Prostate gland (tissue), 2 donors: ENCODE measurements at regions of chr14 and their contacts with region 1.

Region 1: DNA sequence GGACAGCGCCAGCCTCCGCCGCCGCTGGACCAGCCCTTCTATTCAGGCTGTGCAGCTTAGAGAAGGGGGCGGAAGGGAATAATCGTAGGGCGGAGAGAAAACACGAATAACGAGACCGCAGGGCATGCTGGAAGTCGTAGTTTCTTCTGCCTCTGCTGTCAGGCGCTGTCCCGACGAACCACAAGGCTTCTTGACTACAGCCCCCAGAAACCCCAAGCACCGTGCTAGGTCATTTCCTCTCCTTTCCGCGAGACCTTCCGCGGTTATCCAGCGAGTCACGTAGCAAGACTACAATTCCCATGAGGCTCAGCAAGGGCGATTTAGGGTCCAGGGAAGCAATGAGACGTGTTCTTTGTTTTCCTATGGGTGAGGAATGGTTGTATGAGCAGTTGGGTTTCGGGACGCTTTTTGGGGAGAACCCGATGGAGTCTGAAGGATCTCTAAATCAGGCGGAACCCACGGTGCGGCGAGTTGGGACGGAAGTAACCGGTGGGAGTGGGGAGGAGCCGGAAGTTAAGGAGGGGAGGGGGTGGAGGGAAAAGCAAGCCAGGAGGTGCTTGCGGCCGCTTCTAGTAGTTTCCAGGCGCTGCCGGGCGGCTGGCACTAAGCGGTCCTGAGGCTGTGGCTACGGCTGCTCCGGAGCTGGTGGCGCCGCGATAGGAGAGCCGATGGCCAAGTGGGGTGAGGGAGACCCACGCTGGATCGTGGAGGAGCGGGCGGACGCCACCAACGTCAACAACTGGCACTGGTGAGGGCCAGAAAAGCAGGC is at the starts of genes AHSA1 and VIPAS39:
- DNase-seq: peak; percentile 97
- H3K4me3 ChIP-seq: peak within 1 kb of the TSS; percentile 71 to 84
- H3K27ac ChIP-seq: peak within 1 kb of the TSS; percentile 92 to 97
- H3K4me1 ChIP-seq: no peaks in the 10 kb centered on the region
- H3K27me3 ChIP-seq: no peaks in the 10 kb centered on the region
- CTCF ChIP-seq: peak in 1 of 4 experiments; percentile 14
- POLR2A ChIP-seq: peak; percentile 78
- total RNA-seq, gene AHSA1: 144 to 267 TPM
- total RNA-seq, gene VIPAS39: 19.6 to 45.4 TPM

Region 2: GRCh38 chr14:77158175-77158891 is 299.4 kb before region 1 on chr14:
- intact Hi-C with region 1: loop called (anchors 5 kb)
- DNase-seq: no peak
- H3K4me3 ChIP-seq: no peak overlapping the region
- H3K27ac ChIP-seq: no peak overlapping the region
- H3K4me1 ChIP-seq: no peaks in the 10 kb centered on the region
- H3K27me3 ChIP-seq: peaks cover 2% of the 10 kb centered on the region
- CTCF ChIP-seq: no peak
- POLR2A ChIP-seq: no peak

Region 3: GRCh38 chr14:77320238-77320935 is 137.3 kb before region 1 on chr14 and contains the start of gene POMT2:
- intact Hi-C with region 1: loop called (anchors 2 kb)
- DNase-seq: peak; percentile 93
- H3K4me3 ChIP-seq: peak within 1 kb of the TSS; percentile 87 to 93
- H3K27ac ChIP-seq: peak within 1 kb of the TSS; percentile 98 to 99
- H3K4me1 ChIP-seq: peaks cover 7% of the 10 kb centered on the region
- H3K27me3 ChIP-seq: no peaks in the 10 kb centered on the region
- CTCF ChIP-seq: peak; percentile 50 to 84 (median 64)
- POLR2A ChIP-seq: no peak
- total RNA-seq, gene POMT2: 8.4 to 101 TPM

Region 4: GRCh38 chr14:77376771-77377501 is 80.8 kb before region 1 on chr14 and contains the starts of genes SAMD15 and TMED8:
- intact Hi-C with region 1: loop called (anchors 5 kb)
- DNase-seq: peak; percentile 74
- H3K4me3 ChIP-seq: peak within 1 kb of the TSS; percentile 73
- H3K27ac ChIP-seq: peak within 1 kb of the TSS; percentile 84 to 85
- H3K4me1 ChIP-seq: peaks cover 2% of the 10 kb centered on the region
- H3K27me3 ChIP-seq: no peaks in the 10 kb centered on the region
- CTCF ChIP-seq: peak in 2 of 4 experiments; percentile 43 to 48
- POLR2A ChIP-seq: peak; percentile 31
- total RNA-seq, gene SAMD15: 0.96 to 2.9 TPM
- total RNA-seq, gene TMED8: 14.7 to 35.2 TPM

Region 5: GRCh38 chr14:77547512-77548180 is 89.9 kb after region 1 on chr14:
- intact Hi-C with region 1: loop called (anchors 2 kb)
- DNase-seq: no peak
- H3K4me3 ChIP-seq: no peak overlapping the region
- H3K27ac ChIP-seq: no peak overlapping the region
- H3K4me1 ChIP-seq: no peaks in the 10 kb centered on the region
- H3K27me3 ChIP-seq: no peaks in the 10 kb centered on the region
- CTCF ChIP-seq: no peak
- POLR2A ChIP-seq: no peak

Region 6: DNA sequence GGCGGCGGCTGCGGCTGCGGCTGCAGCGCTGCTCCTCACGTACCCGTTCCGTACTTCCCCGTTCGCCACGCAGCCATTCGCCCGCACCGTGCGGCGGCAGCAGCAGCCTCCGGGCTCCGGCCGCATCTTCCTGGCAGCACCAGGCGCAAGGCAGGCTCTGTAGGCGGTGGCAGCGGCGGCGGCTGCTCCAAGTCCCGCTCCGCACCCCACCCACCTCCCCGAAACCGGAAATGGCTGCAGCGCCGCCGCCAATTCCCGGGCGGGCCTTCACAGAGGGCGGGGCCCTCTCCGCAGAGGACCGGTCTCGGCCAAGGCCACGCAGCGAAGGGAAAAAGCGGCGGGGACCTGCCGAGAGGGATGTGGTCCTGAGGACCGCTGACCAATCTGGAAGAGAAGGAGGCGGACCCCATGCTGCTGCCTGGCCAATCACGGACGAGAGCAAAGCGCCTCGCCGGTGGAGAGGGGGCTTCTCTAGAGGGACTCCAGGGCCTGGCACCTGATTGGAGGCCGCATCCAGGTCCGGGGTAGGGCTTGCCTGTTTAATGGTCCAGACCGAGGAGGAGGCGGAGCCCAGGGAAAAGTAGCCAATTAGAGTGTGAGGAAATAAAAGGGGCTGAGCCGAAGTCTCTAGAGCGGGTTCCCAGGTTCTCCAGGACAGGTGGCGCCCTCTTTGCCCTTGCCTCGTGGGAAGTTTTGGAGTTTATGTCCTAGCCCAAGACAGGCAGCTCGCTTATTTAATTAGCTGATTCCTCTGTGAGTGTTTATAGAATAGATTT is 158.9 kb after region 1 on chr14 and contains the start of gene SPTLC2:
- intact Hi-C with region 1: loop called (anchors 2 kb)
- DNase-seq: peak; percentile 99
- H3K4me3 ChIP-seq: peak within 1 kb of the TSS; percentile 71 to 97
- H3K27ac ChIP-seq: peak within 1 kb of the TSS; percentile 72 to 86
- H3K4me1 ChIP-seq: no peaks in the 10 kb centered on the region
- H3K27me3 ChIP-seq: no peaks in the 10 kb centered on the region
- CTCF ChIP-seq: peak in 1 of 4 experiments; percentile 12
- POLR2A ChIP-seq: peak; percentile 91
- total RNA-seq, gene SPTLC2: 20.0 to 24.5 TPM

Region 7: GRCh38 chr14:77707724-77708408 is 250.2 kb after region 1 on chr14 and contains the starts of genes ALKBH1 and SLIRP:
- intact Hi-C with region 1: loop called (anchors 10 kb)
- DNase-seq: peak; percentile 79
- H3K4me3 ChIP-seq: peak within 1 kb of the TSS; percentile 74 to 96
- H3K27ac ChIP-seq: peak within 1 kb of the TSS; percentile 67 to 74
- H3K4me1 ChIP-seq: no peaks in the 10 kb centered on the region
- H3K27me3 ChIP-seq: no peaks in the 10 kb centered on the region
- CTCF ChIP-seq: no peak
- POLR2A ChIP-seq: peak; percentile 26
- total RNA-seq, gene ALKBH1: 12.5 to 20.4 TPM
- total RNA-seq, gene SLIRP: 126 to 341 TPM